ENCODE measurements at regions of chr5 and their contacts with region 1.

Region 1: GRCh38 chr5:71782771-71783770 is 64.0 kb downstream of the CARTPT start:
- DNase-seq: peak; percentile 80
- H3K4me3 ChIP-seq: peak overlapping the region; percentile 48
- H3K27ac ChIP-seq: peak overlapping the region; percentile 47
- H3K4me1 ChIP-seq: peaks cover 4% of the 10 kb centered on the region
- H3K27me3 ChIP-seq: no peaks in the 10 kb centered on the region
- CTCF ChIP-seq: peak; percentile 90

Region 2: GRCh38 chr5:72108202-72109061 is 325.4 kb after region 1 on chr5:
- intact Hi-C with region 1: loop called (anchors 10 kb)
- DNase-seq: peak; percentile 87
- H3K4me3 ChIP-seq: peak overlapping the region; percentile 92
- H3K27ac ChIP-seq: peak overlapping the region; percentile 89
- H3K4me1 ChIP-seq: peaks cover 63% of the 10 kb centered on the region
- H3K27me3 ChIP-seq: no peaks in the 10 kb centered on the region
- CTCF ChIP-seq: no peak

Measured in left ventricle myocardium inferior (tissue), 1 donor.